GM12878 (cell line): ENCODE measurements at regions of chr12 and their contacts with region 1.

Region 1: GRCh38 chr12:125683748-125684381 is 618.6 kb downstream of the AACS start:
- DNase-seq: no peak
- ATAC-seq: peak; percentile 96
- H3K4me3 ChIP-seq: no peak overlapping the region
- H3K27ac ChIP-seq: no peak overlapping the region
- H3K4me1 ChIP-seq: no peaks in the 10 kb centered on the region
- H3K27me3 ChIP-seq: no peaks in the 10 kb centered on the region
- CTCF ChIP-seq: peak; percentile 59 to 76 (median 65)
- EP300 ChIP-seq: no peak
- POLR2A ChIP-seq: no peak
- RAD21 ChIP-seq: peak; percentile 62

Region 2: GRCh38 chr12:125351788-125352187 is 332.1 kb before region 1 on chr12:
- CTCF ChIA-PET with region 1: no interaction called
- POLR2A ChIA-PET with region 1: no interaction called
- RAD21 ChIA-PET with region 1: no interaction called
- SMC1A ChIA-PET with region 1: no interaction called
- in situ Hi-C with region 1: no loop called
- intact Hi-C with region 1: no loop called
- DNase-seq: no peak
- ATAC-seq: no peak
- H3K4me3 ChIP-seq: no peak overlapping the region
- H3K27ac ChIP-seq: no peak overlapping the region
- H3K4me1 ChIP-seq: no peaks in the 10 kb centered on the region
- H3K27me3 ChIP-seq: no peaks in the 10 kb centered on the region; a peak in 1 of 4 replicates
- CTCF ChIP-seq: no peak
- EP300 ChIP-seq: no peak
- POLR2A ChIP-seq: no peak
- RAD21 ChIP-seq: no peak

Region 3: DNA sequence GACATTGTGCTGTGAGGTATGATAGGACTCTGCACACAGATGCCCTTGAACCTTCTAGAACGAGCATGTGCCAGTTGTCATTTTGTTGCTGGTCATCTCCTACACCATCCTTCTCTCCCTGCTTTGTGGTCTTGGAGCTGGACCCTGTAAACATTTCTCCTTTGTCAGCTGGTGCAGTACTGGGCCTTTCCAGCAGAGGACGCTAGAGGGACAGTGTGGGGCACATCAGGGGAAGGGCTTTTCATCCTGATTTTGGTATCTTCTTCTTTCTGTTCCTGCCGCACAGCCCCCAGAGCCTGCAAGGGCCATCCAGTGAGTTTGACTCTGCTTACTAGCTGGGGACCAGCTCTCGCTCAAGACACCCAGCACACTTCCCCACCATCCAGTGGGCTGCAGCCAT is 134.0 kb before region 1 on chr12:
- CTCF ChIA-PET with region 1: interaction called, 33 read pairs
- POLR2A ChIA-PET with region 1: no interaction called
- RAD21 ChIA-PET with region 1: no interaction called
- SMC1A ChIA-PET with region 1: interaction called, 5 read pairs
- in situ Hi-C with region 1: no loop called
- intact Hi-C with region 1: no loop called
- DNase-seq: no peak
- ATAC-seq: no peak
- H3K4me3 ChIP-seq: no peak overlapping the region
- H3K27ac ChIP-seq: no peak overlapping the region
- H3K4me1 ChIP-seq: no peaks in the 10 kb centered on the region
- H3K27me3 ChIP-seq: no peaks in the 10 kb centered on the region
- CTCF ChIP-seq: peak; percentile 36 to 62 (median 61); a peak in 4 of 6 replicates
- EP300 ChIP-seq: no peak
- POLR2A ChIP-seq: no peak
- RAD21 ChIP-seq: 0 out of 2 replicates have a peak, but pooled peaks have one; percentile 26

Region 4: DNA sequence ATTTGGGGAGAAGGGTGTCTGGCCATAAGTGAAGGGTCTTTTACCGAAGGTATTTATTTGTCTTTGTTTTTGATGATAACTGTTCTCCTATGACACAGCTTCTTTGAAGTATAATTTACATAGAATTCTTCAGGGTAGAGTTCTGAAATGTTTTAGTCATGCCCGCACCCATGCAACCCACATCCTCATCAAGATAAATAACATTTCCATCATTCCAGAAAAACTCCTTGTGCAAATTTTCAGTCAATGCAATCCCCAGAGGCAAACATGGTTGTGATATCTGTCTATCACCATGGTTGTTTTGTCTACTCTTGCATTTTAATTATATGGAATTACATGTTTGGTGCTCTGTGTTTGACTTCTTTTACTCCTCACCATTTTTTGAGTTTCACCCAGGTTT is 219.1 kb after region 1 on chr12:
- CTCF ChIA-PET with region 1: no interaction called
- POLR2A ChIA-PET with region 1: no interaction called
- RAD21 ChIA-PET with region 1: no interaction called
- SMC1A ChIA-PET with region 1: no interaction called
- in situ Hi-C with region 1: no loop called
- intact Hi-C with region 1: no loop called
- DNase-seq: no peak
- ATAC-seq: no peak
- H3K4me3 ChIP-seq: no peak overlapping the region
- H3K27ac ChIP-seq: no peak overlapping the region
- H3K4me1 ChIP-seq: no peaks in the 10 kb centered on the region
- H3K27me3 ChIP-seq: no peaks in the 10 kb centered on the region
- CTCF ChIP-seq: no peak
- EP300 ChIP-seq: no peak
- POLR2A ChIP-seq: no peak
- RAD21 ChIP-seq: no peak